ENCODE measurements at regions of chr11 and their contacts with region 1.

Region 1: DNA sequence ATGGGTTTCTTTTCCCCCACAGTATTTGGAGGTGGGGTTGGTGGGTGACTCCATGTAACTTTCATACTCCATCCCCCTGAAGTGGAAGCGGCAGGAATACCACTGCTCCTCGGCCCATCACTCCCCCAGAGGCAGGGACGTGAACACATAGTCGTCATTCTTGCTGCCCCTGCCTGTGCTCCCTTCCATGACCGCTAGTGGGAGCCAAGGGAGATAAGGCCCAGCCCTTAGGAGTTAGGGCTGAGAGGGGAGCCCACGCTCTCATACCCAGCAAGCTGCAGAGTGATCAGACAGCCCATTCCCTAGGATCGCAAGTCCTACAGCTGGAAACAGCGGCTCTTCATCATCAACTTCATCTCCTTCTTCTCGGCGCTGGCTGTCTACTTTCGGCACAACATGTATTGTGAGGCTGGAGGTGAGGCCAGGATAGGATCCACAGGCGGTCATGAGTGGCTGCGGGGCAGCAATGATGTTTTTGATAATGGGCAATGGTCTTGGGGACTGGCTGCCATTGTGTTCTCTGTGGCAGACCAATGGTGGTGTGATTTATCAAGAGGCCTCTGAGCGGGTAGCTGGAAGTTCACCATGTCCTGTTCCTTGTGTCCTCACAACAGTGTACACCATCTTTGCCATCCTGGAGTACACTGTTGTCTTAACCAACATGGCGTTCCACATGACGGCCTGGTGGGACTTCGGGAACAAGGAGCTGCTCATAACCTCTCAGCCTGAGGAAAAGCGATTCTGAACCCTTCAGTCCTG is 15.9 kb downstream of the RHOG start:
- DNase-seq: peak; percentile 69
- ATAC-seq: peak; percentile 94
- H3K4me3 ChIP-seq: no peak overlapping the region
- H3K27ac ChIP-seq: no peak overlapping the region
- H3K4me1 ChIP-seq: no peaks in the 10 kb centered on the region
- H3K27me3 ChIP-seq: no peaks in the 10 kb centered on the region
- CTCF ChIP-seq: peak; percentile 86
- EP300 ChIP-seq: no peak
- POLR2A ChIP-seq: no peak
- RAD21 ChIP-seq: peak; percentile 58

Region 2: GRCh38 chr11:3773180-3773579 is 51.7 kb before region 1 on chr11:
- CTCF ChIA-PET with region 1: no interaction called
- POLR2A ChIA-PET with region 1: no interaction called
- in situ Hi-C with region 1: no loop called
- intact Hi-C with region 1: no loop called
- DNase-seq: no peak
- ATAC-seq: no peak
- H3K4me3 ChIP-seq: no peak overlapping the region
- H3K27ac ChIP-seq: no peak overlapping the region
- H3K4me1 ChIP-seq: no peaks in the 10 kb centered on the region
- H3K27me3 ChIP-seq: no peaks in the 10 kb centered on the region
- CTCF ChIP-seq: no peak
- EP300 ChIP-seq: no peak
- POLR2A ChIP-seq: no peak
- RAD21 ChIP-seq: no peak

Region 3: DNA sequence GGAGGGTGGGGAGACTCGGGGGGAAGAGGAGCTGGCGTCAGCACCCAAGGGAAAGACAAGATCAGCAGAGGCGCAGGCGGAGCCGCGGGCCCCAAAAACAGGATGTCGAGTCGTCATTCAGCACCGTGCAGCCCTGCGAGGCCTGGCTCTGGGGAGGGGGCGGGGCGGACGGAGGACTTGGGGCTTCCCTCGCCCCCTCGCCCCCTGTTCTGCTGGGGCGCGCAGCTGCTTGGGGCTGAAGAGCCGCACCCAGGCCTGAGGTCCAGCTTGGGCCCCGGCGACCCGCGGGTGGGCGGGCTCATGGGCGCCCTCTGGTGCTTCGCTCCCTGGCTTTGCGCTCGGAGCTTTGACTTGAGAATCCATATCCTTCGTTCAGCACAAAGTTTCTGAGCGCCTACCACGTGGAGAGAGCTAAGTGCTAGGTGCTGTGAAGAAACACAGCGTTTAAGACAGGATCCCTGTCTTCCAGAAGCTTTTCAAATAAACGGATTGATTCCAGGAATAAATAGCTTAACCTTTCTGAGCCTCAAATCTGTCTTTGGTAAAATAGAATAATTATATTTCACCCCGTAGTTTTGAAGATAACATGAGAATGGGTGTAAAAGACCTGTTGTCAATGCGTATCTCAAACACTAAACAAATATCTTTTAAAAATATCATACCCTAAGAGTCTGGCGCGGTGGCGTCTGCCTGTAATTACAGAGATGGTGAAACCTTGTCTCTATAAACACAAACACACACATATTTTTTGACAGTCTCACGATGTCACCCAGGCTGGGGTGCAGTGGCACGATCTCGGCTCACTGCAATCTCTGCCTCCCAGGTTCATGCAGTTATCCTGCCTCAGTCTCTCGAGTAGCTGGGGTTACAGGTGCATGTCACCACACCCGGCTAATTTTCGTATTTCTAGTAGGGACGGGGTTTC is 16.8 kb after region 1 on chr11:
- CTCF ChIA-PET with region 1: interaction called, 15 read pairs
- POLR2A ChIA-PET with region 1: no interaction called
- in situ Hi-C with region 1: no loop called
- intact Hi-C with region 1: loop called (anchors 1 kb)
- DNase-seq: peak; percentile 79
- ATAC-seq: peak; percentile 84
- H3K4me3 ChIP-seq: peak overlapping the region; percentile 79 to 84 (median 83)
- H3K27ac ChIP-seq: peak overlapping the region; percentile 75
- H3K4me1 ChIP-seq: peaks cover 46% of the 10 kb centered on the region
- H3K27me3 ChIP-seq: no peaks in the 10 kb centered on the region; a peak in 1 of 5 replicates
- CTCF ChIP-seq: peak; percentile 91
- EP300 ChIP-seq: no peak
- POLR2A ChIP-seq: no peak
- RAD21 ChIP-seq: peak; percentile 63

Measured in HepG2 (cell line).